Caco-2 (cell line): ENCODE measurements at regions of chr2 and their contacts with region 1.

Region 1: GRCh38 chr2:235263205-235264122 is 230.4 kb upstream of the AGAP1 start:
- DNase-seq: peak; percentile 62 to 79
- H3K4me3 ChIP-seq: peak overlapping the region; percentile 31
- H3K4me3 Mint-ChIP-seq: peak overlapping the region; percentile 83
- H3K27ac Mint-ChIP-seq: peak overlapping the region; percentile 92
- H3K4me1 ChIP-seq: peaks cover 10% of the 10 kb centered on the region
- H3K4me1 Mint-ChIP-seq: peaks cover 5% of the 10 kb centered on the region
- H3K27me3 ChIP-seq: no peaks in the 10 kb centered on the region
- H3K27me3 Mint-ChIP-seq: no peaks in the 10 kb centered on the region
- CTCF ChIP-seq: no peak

Region 2: GRCh38 chr2:234595829-234596228 is 667.6 kb before region 1 on chr2:
- CTCF ChIA-PET with region 1: no interaction called
- POLR2A ChIA-PET with region 1: no interaction called
- intact Hi-C with region 1: no loop called
- DNase-seq: no peak
- H3K4me3 ChIP-seq: no peak overlapping the region
- H3K4me3 Mint-ChIP-seq: no peak overlapping the region
- H3K27ac Mint-ChIP-seq: no peak overlapping the region
- H3K4me1 ChIP-seq: no peaks in the 10 kb centered on the region
- H3K4me1 Mint-ChIP-seq: no peaks in the 10 kb centered on the region
- H3K27me3 ChIP-seq: no peaks in the 10 kb centered on the region
- H3K27me3 Mint-ChIP-seq: no peaks in the 10 kb centered on the region
- CTCF ChIP-seq: no peak

Region 3: GRCh38 chr2:235170536-235171521 is 92.6 kb before region 1 on chr2:
- CTCF ChIA-PET with region 1: no interaction called
- POLR2A ChIA-PET with region 1: no interaction called
- intact Hi-C with region 1: loop called (anchors 1 kb)
- DNase-seq: peak; percentile 63 to 73
- H3K4me3 ChIP-seq: no peak overlapping the region
- H3K4me3 Mint-ChIP-seq: no peak overlapping the region
- H3K27ac Mint-ChIP-seq: peak overlapping the region; percentile 78
- H3K4me1 ChIP-seq: peaks cover 12% of the 10 kb centered on the region; the same call in 1 of the 2 replicates
- H3K4me1 Mint-ChIP-seq: peaks cover 9% of the 10 kb centered on the region
- H3K27me3 ChIP-seq: no peaks in the 10 kb centered on the region
- H3K27me3 Mint-ChIP-seq: no peaks in the 10 kb centered on the region
- CTCF ChIP-seq: peak in 1 of 2 experiments; percentile 42